ENCODE measurements at regions of chr21 and their contacts with region 1.

Region 1: DNA sequence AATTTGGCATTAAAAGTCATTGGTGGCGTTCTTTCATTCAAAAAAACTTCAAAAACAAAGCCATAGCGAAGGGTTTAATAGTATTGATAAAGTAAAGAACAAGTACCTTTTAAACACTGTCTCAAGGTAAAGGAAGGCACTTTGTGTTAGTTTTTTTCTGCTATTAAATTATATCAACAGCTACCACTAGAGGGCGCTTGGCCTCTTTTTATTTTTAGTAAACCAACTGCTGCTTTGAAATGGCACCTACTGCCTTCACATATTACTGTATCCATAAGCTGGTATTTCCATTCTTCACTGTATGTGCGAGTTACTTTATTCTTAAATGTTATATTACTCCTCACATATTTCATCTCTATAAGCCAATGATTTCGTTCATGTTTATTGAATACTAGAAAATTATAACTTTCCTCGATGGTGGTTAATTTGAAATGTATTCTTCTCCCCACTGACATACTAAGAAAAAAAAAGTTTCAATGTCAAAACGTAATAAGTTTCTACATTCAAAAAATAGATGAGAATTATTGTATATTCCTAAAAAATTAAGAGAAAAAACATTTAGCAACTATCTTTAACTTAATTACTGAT is 125.7 kb upstream of the CXADR start:
- DNase-seq: peak; percentile 47
- H3K4me3 ChIP-seq: no peak overlapping the region
- H3K27ac ChIP-seq: no peak overlapping the region
- H3K4me1 ChIP-seq: no peaks in the 10 kb centered on the region
- H3K27me3 ChIP-seq: no peaks in the 10 kb centered on the region
- CTCF ChIP-seq: peak; percentile 57 to 63

Region 2: DNA sequence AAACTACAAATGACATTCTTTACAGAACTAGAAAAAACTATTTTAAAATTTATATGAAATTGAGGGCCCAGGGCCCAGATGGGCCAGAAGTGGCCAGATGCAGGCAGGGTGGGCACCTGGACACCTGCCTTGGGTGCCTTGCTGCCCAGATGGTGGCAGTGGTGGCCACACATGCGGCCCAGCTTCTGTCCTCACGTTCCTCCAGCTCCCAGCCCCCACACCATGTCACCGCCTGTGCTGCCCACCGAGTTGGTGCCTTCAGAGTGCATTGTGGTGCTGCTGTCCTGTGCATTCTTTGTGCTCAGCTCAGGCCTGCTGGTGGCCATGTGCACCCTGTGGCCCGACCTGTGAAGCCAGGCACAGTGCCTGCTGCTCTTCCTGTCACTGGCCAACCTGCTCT is 91.1 kb before region 1 on chr21:
- CTCF ChIA-PET with region 1: no interaction called
- dilution Hi-C with region 1: no loop called
- in situ Hi-C with region 1: no loop called
- intact Hi-C with region 1: no loop called
- DNase-seq: no peak
- H3K4me3 ChIP-seq: no peak overlapping the region
- H3K27ac ChIP-seq: no peak overlapping the region
- H3K4me1 ChIP-seq: no peaks in the 10 kb centered on the region
- H3K27me3 ChIP-seq: no peaks in the 10 kb centered on the region
- CTCF ChIP-seq: no peak

Region 3: GRCh38 chr21:17554679-17555465 is 167.7 kb after region 1 on chr21:
- CTCF ChIA-PET with region 1: interaction called, 19 read pairs
- dilution Hi-C with region 1: loop called (anchors 25 kb)
- in situ Hi-C with region 1: loop called in 1 of 2 experiments (anchors 10 kb)
- intact Hi-C with region 1: loop called (anchors 2 kb)
- DNase-seq: no peak
- H3K4me3 ChIP-seq: no peak overlapping the region
- H3K27ac ChIP-seq: no peak overlapping the region
- H3K4me1 ChIP-seq: no peaks in the 10 kb centered on the region
- H3K27me3 ChIP-seq: no peaks in the 10 kb centered on the region
- CTCF ChIP-seq: peak; percentile 27 to 50

Region 4: DNA sequence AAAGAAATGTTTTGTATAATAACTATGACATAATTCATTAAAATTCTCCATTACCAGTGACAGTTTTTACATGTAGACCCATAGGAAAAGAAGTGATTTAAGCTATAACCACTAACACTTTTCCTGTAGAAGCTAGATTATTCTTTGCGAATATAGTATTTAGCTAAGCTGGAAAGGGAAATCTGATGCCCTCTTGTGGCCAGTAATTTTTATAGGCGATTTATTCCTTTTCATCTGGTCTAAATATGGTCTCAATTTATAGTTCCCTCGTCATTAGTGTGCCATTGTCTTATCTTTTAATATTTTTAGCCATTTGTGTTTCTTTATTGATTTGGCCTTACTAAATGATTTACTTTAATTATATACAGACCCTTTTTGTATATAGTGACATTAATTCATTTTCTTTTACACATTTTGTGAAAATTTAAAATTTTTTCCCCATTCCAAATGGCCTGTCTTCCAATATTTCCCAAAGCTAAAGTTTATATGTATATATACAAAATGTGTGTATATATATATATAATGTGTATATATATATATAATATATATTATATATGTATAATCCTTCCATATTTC is 198.8 kb after region 1 on chr21:
- CTCF ChIA-PET with region 1: interaction called, 12 read pairs
- dilution Hi-C with region 1: no loop called
- in situ Hi-C with region 1: no loop called
- intact Hi-C with region 1: no loop called
- DNase-seq: peak; percentile 24
- H3K4me3 ChIP-seq: no peak overlapping the region
- H3K27ac ChIP-seq: no peak overlapping the region
- H3K4me1 ChIP-seq: no peaks in the 10 kb centered on the region
- H3K27me3 ChIP-seq: no peaks in the 10 kb centered on the region
- CTCF ChIP-seq: peak; percentile 50 to 62

Measured in mammary epithelial cell (primary cell).